Heart left ventricle (tissue), 16 donors: ENCODE measurements at regions of chr4 and their contacts with region 1.

Region 1: GRCh38 chr4:168839758-168840391 is 170.2 kb downstream of the CBR4 start:
- DNase-seq: no peak
- ATAC-seq: peak; percentile 54 to 83 (median 64)
- H3K4me3 ChIP-seq: no peak overlapping the region
- H3K27ac ChIP-seq: peak overlapping the region; percentile 47 to 97 (median 86)
- H3K4me1 ChIP-seq: peaks cover 5 to 93% (median 57%) of the 10 kb centered on the region in 12 donors
- H3K27me3 ChIP-seq: no peaks in the 10 kb centered on the region
- CTCF ChIP-seq: no peak
- POLR2A ChIP-seq: no peak

Region 2: GRCh38 chr4:168717847-168718246 is 122.0 kb before region 1 on chr4:
- intact Hi-C with region 1: loop called in 6 of 10 experiments (anchors 2 to 10 kb)
- DNase-seq: peak in 3 of 5 donors; percentile 51 to 69 (median 65)
- ATAC-seq: peak; percentile 84 to 90 (median 87)
- H3K4me3 ChIP-seq: no peak overlapping the region
- H3K27ac ChIP-seq: peak overlapping the region; percentile 17 to 88 (median 74)
- H3K4me1 ChIP-seq: peaks cover 0 to 47% (median 25%) of the 10 kb centered on the region in 12 donors
- H3K27me3 ChIP-seq: no peaks in the 10 kb centered on the region
- CTCF ChIP-seq: no peak
- POLR2A ChIP-seq: no peak

Region 3: DNA sequence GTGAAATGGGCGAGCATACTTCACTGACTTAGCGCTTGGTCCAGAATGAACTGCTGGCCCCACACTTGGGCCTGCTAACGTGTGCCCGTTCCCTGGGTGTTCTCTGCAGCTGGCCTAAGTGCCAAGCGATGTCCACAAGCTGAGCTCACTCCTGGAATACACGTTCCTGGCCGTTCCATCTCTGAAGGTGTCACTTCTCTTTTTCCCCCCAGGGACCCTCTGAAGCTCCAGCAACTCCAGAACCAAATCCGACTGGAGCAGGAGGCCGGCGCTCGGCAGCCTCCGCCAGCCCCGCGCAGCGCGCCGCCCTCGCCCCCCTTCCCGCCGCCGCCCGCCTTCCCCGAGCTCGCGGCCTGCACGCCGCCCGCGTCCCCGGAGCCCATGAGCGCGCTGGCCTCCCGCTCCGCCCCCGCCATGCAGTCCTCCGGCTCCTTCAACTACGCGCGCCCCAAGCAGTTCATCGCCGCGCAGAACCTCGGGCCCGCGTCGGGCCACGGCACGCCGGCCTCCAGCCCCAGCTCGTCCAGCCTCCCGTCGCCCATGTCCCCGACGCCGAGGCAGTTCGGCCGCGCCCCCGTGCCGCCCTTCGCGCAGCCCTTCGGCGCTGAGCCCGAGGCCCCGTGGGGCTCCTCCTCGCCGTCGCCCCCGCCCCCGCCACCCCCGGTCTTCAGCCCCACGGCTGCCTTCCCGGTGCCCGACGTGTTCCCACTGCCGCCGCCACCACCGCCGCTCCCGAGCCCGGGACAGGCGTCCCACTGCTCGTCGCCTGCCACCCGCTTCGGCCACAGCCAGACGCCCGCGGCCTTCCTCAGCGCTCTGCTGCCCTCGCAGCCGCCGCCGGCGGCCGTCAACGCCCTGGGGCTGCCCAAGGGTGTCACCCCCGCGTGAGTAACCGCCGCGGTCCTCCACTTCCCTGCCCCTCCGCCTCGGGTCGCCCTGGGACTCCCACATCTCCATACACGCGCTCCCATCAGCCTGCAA is 37.9 kb after region 1 on chr4:
- intact Hi-C with region 1: loop called in 1 of 10 experiments (anchors 5 kb)
- DNase-seq: peak; percentile 51 to 79 (median 64)
- ATAC-seq: peak in 3 of 4 donors; percentile 31 to 69 (median 64)
- H3K4me3 ChIP-seq: peak overlapping the region in 11 of 12 donors; percentile 7 to 63 (median 52)
- H3K27ac ChIP-seq: peak overlapping the region; percentile 23 to 82 (median 60)
- H3K4me1 ChIP-seq: peaks cover 0 to 63% (median 33%) of the 10 kb centered on the region in 12 donors
- H3K27me3 ChIP-seq: no peaks in the 10 kb centered on the region
- CTCF ChIP-seq: peak in 1 of 12 donors; percentile 7
- POLR2A ChIP-seq: no peak

Region 4: DNA sequence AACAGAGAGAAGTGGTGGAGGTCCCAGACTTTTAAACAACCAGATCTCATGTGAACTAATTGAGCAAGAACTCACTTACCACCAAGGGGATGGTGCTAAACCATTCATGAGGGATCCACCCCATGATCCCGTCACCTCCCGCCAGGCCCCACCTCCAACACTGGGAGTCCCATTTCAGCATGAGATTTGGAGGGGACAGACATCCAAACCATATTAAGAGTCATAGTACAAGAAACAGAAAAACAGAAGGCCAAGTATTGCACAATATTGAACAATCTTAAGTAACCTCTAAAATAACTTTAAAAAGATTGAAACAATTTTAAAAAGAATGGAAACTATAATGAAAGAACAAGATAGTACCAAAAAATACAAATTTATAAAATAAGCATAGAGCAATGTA is 60.2 kb after region 1 on chr4:
- intact Hi-C with region 1: no loop called
- DNase-seq: peak in 2 of 5 donors; percentile 46 to 57
- ATAC-seq: peak in 2 of 4 donors; percentile 64 to 65
- H3K4me3 ChIP-seq: no peak overlapping the region
- H3K27ac ChIP-seq: peak overlapping the region in 1 of 12 donors; percentile 52
- H3K4me1 ChIP-seq: no peaks in the 10 kb centered on the region
- H3K27me3 ChIP-seq: no peaks in the 10 kb centered on the region
- CTCF ChIP-seq: no peak
- POLR2A ChIP-seq: no peak